Esophagus muscularis mucosa (tissue), 4 donors: ENCODE measurements at regions of chr1 and their contacts with region 1.

Region 1: GRCh38 chr1:223695941-223696340 is 16.4 kb upstream of the CAPN2 start:
- DNase-seq: no peak
- H3K4me3 ChIP-seq: no peak overlapping the region
- H3K27ac ChIP-seq: no peak overlapping the region
- H3K4me1 ChIP-seq: peaks cover 4 to 16% (median 13%) of the 10 kb centered on the region in 4 donors
- H3K27me3 ChIP-seq: no peaks in the 10 kb centered on the region
- CTCF ChIP-seq: no peak
- EP300 ChIP-seq: no peak
- POLR2A ChIP-seq: no peak

Region 2: GRCh38 chr1:223748773-223749733 is 53.1 kb after region 1 on chr1:
- intact Hi-C with region 1: loop called (anchors 5 kb)
- DNase-seq: peak; percentile 94
- H3K4me3 ChIP-seq: peak overlapping the region; percentile 52 to 56 (median 54)
- H3K27ac ChIP-seq: peak overlapping the region; percentile 74 to 82 (median 80)
- H3K4me1 ChIP-seq: peaks cover 22 to 30% (median 25%) of the 10 kb centered on the region in 4 donors
- H3K27me3 ChIP-seq: no peaks in the 10 kb centered on the region
- CTCF ChIP-seq: peak; percentile 94 to 99 (median 97)
- EP300 ChIP-seq: no peak
- POLR2A ChIP-seq: no peak

Region 3: DNA sequence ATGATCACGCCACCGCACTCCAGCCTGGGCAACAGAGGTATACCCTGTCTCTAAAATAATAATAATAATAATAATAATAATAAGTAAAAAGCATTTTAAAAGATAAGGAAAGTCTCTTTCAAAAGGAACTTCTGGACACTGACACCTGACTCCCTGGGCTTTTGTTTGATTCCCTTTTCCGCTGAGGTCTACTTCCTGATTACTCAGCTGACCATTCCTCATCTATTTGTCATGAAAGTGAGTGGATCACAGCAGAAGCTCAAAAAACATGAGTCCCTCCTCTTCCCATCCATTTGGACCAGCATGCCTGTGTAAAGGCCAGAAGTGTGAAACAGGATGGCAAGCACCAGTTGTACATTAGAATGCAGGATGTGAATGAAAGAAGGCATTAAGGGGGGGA is 356.8 kb after region 1 on chr1:
- intact Hi-C with region 1: loop called (anchors 10 kb)
- DNase-seq: no peak
- H3K4me3 ChIP-seq: no peak overlapping the region
- H3K27ac ChIP-seq: no peak overlapping the region
- H3K4me1 ChIP-seq: peaks cover 0 to 3% (median 0%) of the 10 kb centered on the region in 4 donors
- H3K27me3 ChIP-seq: peaks cover 0 to 9% (median 0%) of the 10 kb centered on the region in 4 donors
- CTCF ChIP-seq: no peak
- EP300 ChIP-seq: no peak
- POLR2A ChIP-seq: no peak